ENCODE measurements at regions of chr4 and their contacts with region 1.

Region 1: DNA sequence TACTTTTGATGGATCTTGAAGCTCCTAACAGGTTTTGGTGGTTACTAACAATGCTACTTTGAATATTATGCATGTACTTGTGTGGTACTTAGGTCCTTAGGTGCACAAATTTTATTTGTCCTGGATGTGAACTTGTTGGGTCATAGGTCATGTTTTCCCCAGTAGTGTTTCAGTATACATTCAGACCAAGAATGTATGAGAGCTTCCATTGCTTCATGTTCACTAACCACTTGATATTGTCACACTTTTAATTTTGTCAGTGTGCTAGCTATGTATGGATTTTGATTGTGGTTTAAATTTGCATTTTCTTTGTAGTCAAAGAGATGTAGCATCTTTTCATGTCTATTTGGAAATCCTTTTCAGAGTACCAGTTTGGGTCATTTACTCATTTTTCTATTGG is 32.2 kb downstream of the CLCN3 start:
- DNase-seq: no peak
- ATAC-seq: peak; percentile 74
- H3K4me3 Mint-ChIP-seq: no peak overlapping the region
- H3K27ac Mint-ChIP-seq: no peak overlapping the region
- H3K4me1 Mint-ChIP-seq: peaks cover 19% of the 10 kb centered on the region
- H3K27me3 Mint-ChIP-seq: no peaks in the 10 kb centered on the region

Region 2: DNA sequence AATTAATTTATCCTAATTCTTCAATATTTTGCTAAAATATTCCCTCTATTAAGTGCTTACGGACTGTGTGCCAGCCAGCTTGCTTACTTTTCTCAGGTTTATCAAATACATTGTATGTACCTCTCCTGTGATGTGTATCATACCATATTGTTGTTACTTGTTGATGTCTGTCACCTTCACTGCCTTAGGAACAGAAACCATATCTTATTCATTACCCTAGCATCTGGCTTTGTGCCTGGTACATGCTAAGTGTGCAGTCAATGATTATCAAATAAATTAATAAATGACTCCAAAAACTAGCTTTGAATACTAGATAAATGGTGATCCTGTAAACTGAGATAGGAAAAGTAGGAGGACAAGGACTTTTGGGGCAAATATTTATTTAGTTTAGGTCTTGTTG is 25.2 kb before region 1 on chr4:
- CTCF ChIA-PET with region 1: no interaction called
- POLR2A ChIA-PET with region 1: no interaction called
- intact Hi-C with region 1: loop called in 1 of 2 experiments (anchors 2 kb)
- DNase-seq: no peak
- ATAC-seq: no peak
- H3K4me3 Mint-ChIP-seq: no peak overlapping the region
- H3K27ac Mint-ChIP-seq: peak overlapping the region; percentile 86
- H3K4me1 Mint-ChIP-seq: peaks cover 50% of the 10 kb centered on the region
- H3K27me3 Mint-ChIP-seq: no peaks in the 10 kb centered on the region

Measured in activated CD4-positive, alpha-beta T cell treated with anti-CD3 and anti-CD28 coated beads for 36 hours (primary cell).